ENCODE measurements at regions of chr5 and their contacts with region 1.

Region 1: GRCh38 chr5:132086277-132086794 is 12.7 kb downstream of the CSF2 start:
- DNase-seq: peak; percentile 99
- H3K4me3 ChIP-seq: no peak overlapping the region
- H3K27ac ChIP-seq: peak overlapping the region; percentile 91
- H3K4me1 ChIP-seq: peaks cover 26% of the 10 kb centered on the region
- H3K27me3 ChIP-seq: no peaks in the 10 kb centered on the region
- CTCF ChIP-seq: no peak
- POLR2A ChIP-seq: no peak

Region 2: GRCh38 chr5:131634996-131635754 is 451.2 kb before region 1 on chr5 and contains the start of gene RAPGEF6:
- CTCF ChIA-PET with region 1: no interaction called
- POLR2A ChIA-PET with region 1: no interaction called
- dilution Hi-C with region 1: no loop called
- intact Hi-C with region 1: loop called (anchors 1 kb)
- DNase-seq: peak; percentile 99
- H3K4me3 ChIP-seq: peak within 1 kb of the TSS; percentile 52 to 82 (median 56)
- H3K27ac ChIP-seq: peak within 1 kb of the TSS; percentile 95
- H3K4me1 ChIP-seq: peaks cover 16% of the 10 kb centered on the region
- H3K27me3 ChIP-seq: no peaks in the 10 kb centered on the region
- CTCF ChIP-seq: peak in 1 of 2 donors; percentile 3
- POLR2A ChIP-seq: peak; percentile 76
- total RNA-seq, gene RAPGEF6: 13.9 and 17.5 TPM in 2 replicates

Region 3: GRCh38 chr5:132073231-132074013 is 12.9 kb before region 1 on chr5 and contains the start of gene CSF2:
- CTCF ChIA-PET with region 1: interaction called, 10 read pairs
- POLR2A ChIA-PET with region 1: interaction called, 3 read pairs
- dilution Hi-C with region 1: no loop called
- intact Hi-C with region 1: loop called (anchors 1 kb)
- DNase-seq: peak; percentile 55
- H3K4me3 ChIP-seq: no peak within 1 kb of the TSS
- H3K27ac ChIP-seq: no peak within 1 kb of the TSS
- H3K4me1 ChIP-seq: peaks cover 26% of the 10 kb centered on the region
- H3K27me3 ChIP-seq: no peaks in the 10 kb centered on the region
- CTCF ChIP-seq: no peak
- POLR2A ChIP-seq: no peak
- total RNA-seq, gene CSF2: not detected in 2 replicates

Region 4: DNA sequence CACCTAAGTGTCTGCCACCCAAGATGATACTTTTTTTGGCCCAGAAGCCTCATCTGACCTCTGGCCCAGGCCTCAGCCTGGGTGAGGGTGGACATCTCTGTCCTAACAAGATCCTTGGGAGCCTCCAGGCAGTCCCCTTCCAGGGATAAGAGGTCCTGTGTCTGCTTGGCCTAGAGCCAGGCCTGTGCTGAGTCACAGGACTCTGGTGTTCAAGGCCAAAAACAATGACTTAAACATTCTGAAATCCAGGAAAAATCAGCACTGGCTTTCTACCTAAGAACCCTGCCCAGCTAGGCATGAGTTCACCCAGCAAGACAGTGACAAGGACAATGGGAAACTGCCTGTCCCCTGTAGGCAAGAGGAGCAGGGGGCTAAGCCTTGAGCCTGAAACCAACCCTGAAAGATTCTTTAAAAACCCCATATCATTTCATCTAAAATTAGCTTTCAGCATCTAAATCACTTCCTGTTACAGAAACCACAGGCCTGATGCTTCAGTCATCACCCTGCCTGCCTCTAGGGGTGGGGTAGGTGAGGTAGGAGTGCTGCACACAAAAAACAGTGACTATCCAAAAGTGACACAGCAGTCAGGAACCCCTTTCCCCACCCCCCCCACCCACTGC is 17.1 kb after region 1 on chr5:
- CTCF ChIA-PET with region 1: interaction called, 3 read pairs
- POLR2A ChIA-PET with region 1: interaction called, 3 read pairs
- dilution Hi-C with region 1: no loop called
- intact Hi-C with region 1: loop called (anchors 1 kb)
- DNase-seq: peak; percentile 95
- H3K4me3 ChIP-seq: no peak overlapping the region
- H3K27ac ChIP-seq: peak overlapping the region; percentile 78
- H3K4me1 ChIP-seq: peaks cover 17% of the 10 kb centered on the region
- H3K27me3 ChIP-seq: peaks cover 0 to 4% of the 10 kb centered on the region in 2 experiments
- CTCF ChIP-seq: no peak
- POLR2A ChIP-seq: no peak

Region 5: GRCh38 chr5:132180134-132180745 is 93.9 kb after region 1 on chr5:
- CTCF ChIA-PET with region 1: interaction called, 7 read pairs
- POLR2A ChIA-PET with region 1: no interaction called
- dilution Hi-C with region 1: no loop called
- intact Hi-C with region 1: loop called (anchors 5 kb)
- DNase-seq: peak; percentile 78
- H3K4me3 ChIP-seq: no peak overlapping the region
- H3K27ac ChIP-seq: no peak overlapping the region
- H3K4me1 ChIP-seq: peaks cover 16% of the 10 kb centered on the region
- H3K27me3 ChIP-seq: no peaks in the 10 kb centered on the region
- CTCF ChIP-seq: peak; percentile 70 to 74
- POLR2A ChIP-seq: no peak

Region 6: GRCh38 chr5:132260714-132261551 is 174.6 kb after region 1 on chr5:
- CTCF ChIA-PET with region 1: no interaction called
- POLR2A ChIA-PET with region 1: no interaction called
- dilution Hi-C with region 1: no loop called
- intact Hi-C with region 1: loop called (anchors 5 kb)
- DNase-seq: peak; percentile 91
- H3K4me3 ChIP-seq: no peak overlapping the region
- H3K27ac ChIP-seq: peak overlapping the region; percentile 96
- H3K4me1 ChIP-seq: peaks cover 76% of the 10 kb centered on the region
- H3K27me3 ChIP-seq: no peaks in the 10 kb centered on the region
- CTCF ChIP-seq: no peak
- POLR2A ChIP-seq: no peak

Region 7: DNA sequence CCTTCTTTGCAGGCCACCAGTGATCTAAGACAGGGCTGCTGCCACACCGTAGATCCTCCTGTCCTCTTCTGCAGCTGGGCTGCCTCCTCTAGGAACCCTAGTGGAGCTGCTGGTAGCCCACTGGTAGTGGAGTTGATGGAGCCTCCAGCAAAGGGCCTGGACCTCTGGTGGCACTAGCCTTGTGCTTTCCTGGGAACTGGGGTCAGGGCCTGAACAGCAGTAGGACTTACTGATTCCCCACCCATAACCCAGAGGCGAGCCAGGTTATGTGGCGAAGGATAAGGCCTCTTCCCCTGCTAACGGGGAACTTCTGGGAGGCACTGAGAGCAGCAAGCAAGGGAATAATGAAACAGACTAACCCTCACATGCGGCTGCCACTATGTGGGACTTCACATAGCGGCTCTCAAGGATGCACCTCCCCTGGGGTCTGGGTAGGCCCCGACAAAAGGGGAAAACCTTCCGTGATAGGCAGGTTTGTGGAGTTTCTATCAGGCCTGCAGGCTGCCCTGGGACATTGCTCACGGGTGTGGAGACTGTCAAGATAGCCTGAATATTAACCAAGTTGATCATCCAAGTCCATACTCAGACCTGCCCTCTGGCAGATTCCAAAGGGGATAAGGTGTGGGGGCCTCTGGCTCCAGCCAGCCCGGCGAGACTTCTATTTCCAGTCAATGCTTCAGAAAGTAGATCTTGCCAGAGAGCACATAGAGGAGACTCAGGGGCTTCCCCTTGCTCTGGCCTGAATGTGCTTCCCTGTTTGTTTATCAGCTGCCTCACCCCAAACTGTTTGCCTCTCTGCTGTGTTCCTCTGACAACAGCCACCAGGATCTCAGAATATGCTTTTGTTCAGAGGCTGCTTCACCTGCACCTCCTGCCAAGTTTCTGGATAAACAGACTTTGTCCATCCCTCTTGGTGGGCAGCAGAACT is 215.3 kb after region 1 on chr5:
- CTCF ChIA-PET with region 1: no interaction called
- POLR2A ChIA-PET with region 1: no interaction called
- dilution Hi-C with region 1: no loop called
- intact Hi-C with region 1: no loop called
- DNase-seq: no peak
- H3K4me3 ChIP-seq: no peak overlapping the region
- H3K27ac ChIP-seq: no peak overlapping the region
- H3K4me1 ChIP-seq: peaks cover 3% of the 10 kb centered on the region
- H3K27me3 ChIP-seq: no peaks in the 10 kb centered on the region
- CTCF ChIP-seq: no peak
- POLR2A ChIP-seq: no peak

Region 8: DNA sequence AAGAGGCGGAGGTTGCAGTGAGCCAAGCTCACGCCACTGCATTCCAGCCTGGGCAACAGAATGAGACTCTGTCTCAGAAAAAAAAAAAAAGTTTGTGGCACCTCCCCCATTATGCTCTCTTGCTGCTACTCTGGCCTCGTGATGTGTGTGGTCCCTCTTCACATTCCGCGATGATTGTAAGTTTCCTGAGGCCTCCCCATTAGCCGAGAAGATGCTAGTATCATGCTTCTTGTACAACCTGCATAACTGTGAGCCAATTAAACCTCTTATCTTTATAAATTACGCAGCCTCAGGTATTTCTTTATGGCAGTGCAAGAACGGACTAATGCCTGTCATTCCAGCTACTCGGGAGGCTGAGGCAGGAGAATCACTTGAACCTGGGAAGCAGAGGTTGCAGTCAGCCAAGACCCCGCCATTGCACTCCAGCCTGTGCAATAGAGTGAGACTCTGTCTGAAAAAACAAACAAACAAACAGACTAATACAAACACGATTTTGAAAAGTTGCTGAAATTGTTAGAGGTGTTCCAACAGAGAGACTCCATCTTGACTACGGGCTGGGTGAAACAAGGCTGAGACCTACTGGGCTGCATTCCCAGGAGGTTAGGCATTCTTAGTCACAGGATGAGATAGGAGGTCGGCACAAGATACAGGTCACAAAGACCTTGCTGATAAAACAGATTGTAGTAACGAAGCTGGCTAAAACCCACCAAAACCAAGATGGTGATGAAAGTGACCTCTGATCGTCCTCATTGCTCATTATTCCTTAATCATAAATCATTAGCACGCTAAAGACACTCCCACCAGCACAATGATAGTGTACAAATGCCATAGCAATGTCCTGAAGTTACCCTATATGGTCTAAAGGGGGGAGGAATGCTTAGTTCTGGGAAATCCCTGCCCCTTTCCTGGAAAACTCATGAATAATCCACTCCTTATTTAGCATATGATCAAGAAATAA is 885.4 kb after region 1 on chr5:
- CTCF ChIA-PET with region 1: no interaction called
- POLR2A ChIA-PET with region 1: no interaction called
- dilution Hi-C with region 1: no loop called
- intact Hi-C with region 1: no loop called
- DNase-seq: peak; percentile 36
- H3K4me3 ChIP-seq: no peak overlapping the region
- H3K27ac ChIP-seq: no peak overlapping the region
- H3K4me1 ChIP-seq: peaks cover 3% of the 10 kb centered on the region
- H3K27me3 ChIP-seq: no peaks in the 10 kb centered on the region
- CTCF ChIP-seq: no peak
- POLR2A ChIP-seq: no peak